ENCODE measurements at regions of chr13 and their contacts with region 1.

Region 1: GRCh38 chr13:78147905-78148304 is 229.3 kb upstream of the EDNRB start:
- DNase-seq: peak; percentile 70
- H3K4me3 ChIP-seq: no peak overlapping the region
- H3K27ac ChIP-seq: no peak overlapping the region
- H3K4me1 ChIP-seq: peaks cover 16% of the 10 kb centered on the region
- H3K27me3 ChIP-seq: no peaks in the 10 kb centered on the region

Region 2: GRCh38 chr13:77860507-77860981 is 287.4 kb before region 1 on chr13:
- in situ Hi-C with region 1: no loop called
- DNase-seq: peak; percentile 82
- H3K4me3 ChIP-seq: peak overlapping the region; percentile 20; the same call in 1 of the 2 replicates
- H3K27ac ChIP-seq: peak overlapping the region; percentile 82
- H3K4me1 ChIP-seq: peaks cover 20% of the 10 kb centered on the region
- H3K27me3 ChIP-seq: no peaks in the 10 kb centered on the region

Region 3: GRCh38 chr13:78978381-78978998 is 830.6 kb after region 1 on chr13:
- in situ Hi-C with region 1: loop called (anchors 10 kb)
- DNase-seq: peak; percentile 70
- H3K4me3 ChIP-seq: no peak overlapping the region
- H3K27ac ChIP-seq: no peak overlapping the region
- H3K4me1 ChIP-seq: no peaks in the 10 kb centered on the region
- H3K27me3 ChIP-seq: peaks cover 5% of the 10 kb centered on the region

Measured in GM23248 (cell line).